GM12878 (cell line): ENCODE measurements at regions of chr17 and their contacts with region 1.

Region 1: GRCh38 chr17:28763804-28764266 is 20.0 kb downstream of the TRAF4 start:
- DNase-seq: no peak
- ATAC-seq: peak; percentile 81
- H3K4me3 ChIP-seq: no peak overlapping the region
- H3K27ac ChIP-seq: peak overlapping the region; percentile 48
- H3K4me1 ChIP-seq: peaks cover 15% of the 10 kb centered on the region
- H3K27me3 ChIP-seq: no peaks in the 10 kb centered on the region
- CTCF ChIP-seq: peak; percentile 78 to 94 (median 82)
- EP300 ChIP-seq: no peak
- POLR2A ChIP-seq: no peak
- RAD21 ChIP-seq: peak; percentile 87

Region 2: GRCh38 chr17:28750178-28751047 is 13.4 kb before region 1 on chr17:
- CTCF ChIA-PET with region 1: interaction called, 86 read pairs
- POLR2A ChIA-PET with region 1: interaction called, 7 read pairs
- RAD21 ChIA-PET with region 1: interaction called, 14 read pairs
- SMC1A ChIA-PET with region 1: interaction called, 46 read pairs
- in situ Hi-C with region 1: no loop called
- intact Hi-C with region 1: no loop called
- DNase-seq: peak; percentile 69
- ATAC-seq: peak; percentile 78
- H3K4me3 ChIP-seq: 0 out of 2 replicates have a peak overlapping the region, but pooled peaks have one; percentile 17
- H3K27ac ChIP-seq: no peak overlapping the region
- H3K4me1 ChIP-seq: peaks cover 30% of the 10 kb centered on the region
- H3K27me3 ChIP-seq: no peaks in the 10 kb centered on the region
- CTCF ChIP-seq: peak; percentile 100; a peak in 5 of 6 replicates
- EP300 ChIP-seq: no peak
- POLR2A ChIP-seq: peak; percentile 78
- RAD21 ChIP-seq: peak; percentile 76

Region 3: GRCh38 chr17:28828294-28829040 is 64.6 kb after region 1 on chr17:
- CTCF ChIA-PET with region 1: interaction called, 54 read pairs
- POLR2A ChIA-PET with region 1: interaction called, 5 read pairs
- RAD21 ChIA-PET with region 1: interaction called, 4 read pairs
- SMC1A ChIA-PET with region 1: interaction called, 6 read pairs
- in situ Hi-C with region 1: no loop called
- intact Hi-C with region 1: no loop called
- DNase-seq: no peak
- ATAC-seq: no peak
- H3K4me3 ChIP-seq: no peak overlapping the region
- H3K27ac ChIP-seq: no peak overlapping the region
- H3K4me1 ChIP-seq: no peaks in the 10 kb centered on the region
- H3K27me3 ChIP-seq: no peaks in the 10 kb centered on the region
- CTCF ChIP-seq: no peak
- EP300 ChIP-seq: no peak
- POLR2A ChIP-seq: no peak
- RAD21 ChIP-seq: no peak

Region 4: DNA sequence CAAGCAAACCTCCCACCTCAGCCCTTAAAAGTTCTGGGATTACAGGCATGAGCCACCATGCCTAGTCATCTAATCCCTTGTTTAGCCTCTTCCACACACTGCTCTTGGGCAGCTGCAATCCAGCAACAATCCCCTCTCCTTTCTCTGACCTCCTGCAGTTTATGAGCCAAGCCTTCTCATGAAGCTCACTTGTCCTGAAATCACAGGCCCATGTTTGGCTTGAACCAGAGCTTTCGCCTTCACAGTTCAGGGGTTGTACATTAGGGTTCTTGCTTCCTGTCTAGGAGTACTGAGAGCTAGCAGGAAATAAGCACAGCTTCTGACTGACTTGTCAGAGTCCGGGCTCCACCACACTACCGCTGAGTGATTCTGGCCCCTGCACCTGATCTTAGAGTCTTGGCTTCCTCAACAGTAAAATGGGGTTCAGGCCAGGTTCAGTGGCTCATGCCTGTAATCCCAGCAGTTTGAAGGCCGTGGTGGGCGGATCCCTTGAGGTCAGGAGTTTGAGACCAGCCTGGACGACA is 107.3 kb after region 1 on chr17:
- CTCF ChIA-PET with region 1: interaction called, 21 read pairs
- POLR2A ChIA-PET with region 1: no interaction called
- RAD21 ChIA-PET with region 1: interaction called, 13 read pairs
- SMC1A ChIA-PET with region 1: interaction called, 7 read pairs
- in situ Hi-C with region 1: no loop called
- intact Hi-C with region 1: no loop called
- DNase-seq: peak; percentile 79
- ATAC-seq: peak; percentile 99
- H3K4me3 ChIP-seq: no peak overlapping the region
- H3K27ac ChIP-seq: peak overlapping the region; percentile 61
- H3K4me1 ChIP-seq: peaks cover 15% of the 10 kb centered on the region
- H3K27me3 ChIP-seq: no peaks in the 10 kb centered on the region
- CTCF ChIP-seq: no peak
- EP300 ChIP-seq: no peak
- POLR2A ChIP-seq: peak; percentile 61
- RAD21 ChIP-seq: peak; percentile 25; the same call in 1 of the 2 replicates

Region 5: DNA sequence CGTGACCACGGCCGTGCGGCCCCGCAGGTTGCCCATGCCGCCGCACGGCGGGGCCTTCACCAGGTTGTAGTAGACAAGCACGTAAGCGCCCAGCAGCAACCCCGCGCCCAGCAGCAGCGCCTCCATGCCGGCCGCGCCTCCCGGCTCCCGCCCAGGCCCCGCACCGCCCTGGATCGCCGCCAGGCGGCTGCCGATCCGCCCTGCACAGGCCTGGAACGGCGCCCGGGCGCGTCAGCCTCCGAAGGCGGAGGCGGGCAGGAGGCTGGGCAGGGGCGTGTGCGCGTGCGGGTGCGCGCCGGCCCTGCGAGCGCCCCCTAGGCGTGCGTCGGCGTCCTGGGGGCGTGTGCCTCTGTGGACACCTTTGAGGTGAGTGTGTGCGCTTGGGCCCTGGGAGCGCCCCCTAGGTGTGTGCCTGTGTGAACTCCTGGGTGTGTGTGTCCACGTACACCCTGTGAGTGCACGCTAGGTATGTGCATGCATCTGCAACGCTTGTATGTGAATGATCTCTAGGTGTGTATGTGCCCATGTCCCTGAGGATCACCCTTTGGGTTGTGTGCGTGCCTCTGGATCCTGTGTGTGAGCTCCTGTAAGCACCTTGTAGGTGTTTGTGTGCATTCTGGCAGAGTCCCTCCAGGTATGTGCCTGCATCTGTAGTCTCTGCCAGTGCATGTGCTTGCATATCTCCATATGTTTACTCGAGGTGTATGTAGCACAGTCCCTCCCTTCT is 139.1 kb after region 1 on chr17 and contains the start of gene DHRS13:
- CTCF ChIA-PET with region 1: interaction called, 175 read pairs
- POLR2A ChIA-PET with region 1: interaction called, 4 read pairs
- RAD21 ChIA-PET with region 1: interaction called, 29 read pairs
- SMC1A ChIA-PET with region 1: interaction called, 37 read pairs
- in situ Hi-C with region 1: no loop called
- intact Hi-C with region 1: loop called (anchors 1 kb)
- DNase-seq: peak; percentile 81
- ATAC-seq: peak; percentile 91
- H3K4me3 ChIP-seq: peak within 1 kb of the TSS; percentile 82
- H3K27ac ChIP-seq: no peak within 1 kb of the TSS; the same call in 1 of the 2 replicates
- H3K4me1 ChIP-seq: peaks cover 16% of the 10 kb centered on the region
- H3K27me3 ChIP-seq: no peaks in the 10 kb centered on the region
- CTCF ChIP-seq: peak; percentile 89 to 100 (median 97)
- EP300 ChIP-seq: peak in 1 of 2 experiments; percentile 51; a peak in 1 of 4 replicates
- POLR2A ChIP-seq: peak; percentile 70
- RAD21 ChIP-seq: peak; percentile 54
- polyA plus RNA-seq, gene DHRS13: 0.18 TPM in 1 of 2 experiments, not detected in the other

Region 6: GRCh38 chr17:28946239-28946638 is 182.4 kb after region 1 on chr17:
- CTCF ChIA-PET with region 1: interaction called, 92 read pairs
- POLR2A ChIA-PET with region 1: interaction called, 5 read pairs
- RAD21 ChIA-PET with region 1: interaction called, 21 read pairs
- SMC1A ChIA-PET with region 1: interaction called, 43 read pairs
- in situ Hi-C with region 1: no loop called
- intact Hi-C with region 1: no loop called
- DNase-seq: no peak
- ATAC-seq: no peak
- H3K4me3 ChIP-seq: 0 out of 2 replicates have a peak overlapping the region, but pooled peaks have one; percentile 53
- H3K27ac ChIP-seq: peak overlapping the region; percentile 15; the same call in 1 of the 2 replicates
- H3K4me1 ChIP-seq: peaks cover 13% of the 10 kb centered on the region
- H3K27me3 ChIP-seq: no peaks in the 10 kb centered on the region
- CTCF ChIP-seq: no peak
- EP300 ChIP-seq: no peak
- POLR2A ChIP-seq: no peak
- RAD21 ChIP-seq: no peak